Mammary epithelial cell (primary cell): ENCODE measurements at regions of chr7 and their contacts with region 1.

Region 1: GRCh38 chr7:24812310-24812945 is 55.2 kb upstream of the GSDME start:
- DNase-seq: peak; percentile 39
- H3K4me3 ChIP-seq: no peak overlapping the region
- H3K27ac ChIP-seq: no peak overlapping the region
- H3K4me1 ChIP-seq: no peaks in the 10 kb centered on the region
- H3K27me3 ChIP-seq: no peaks in the 10 kb centered on the region
- CTCF ChIP-seq: peak; percentile 83 to 92

Region 2: DNA sequence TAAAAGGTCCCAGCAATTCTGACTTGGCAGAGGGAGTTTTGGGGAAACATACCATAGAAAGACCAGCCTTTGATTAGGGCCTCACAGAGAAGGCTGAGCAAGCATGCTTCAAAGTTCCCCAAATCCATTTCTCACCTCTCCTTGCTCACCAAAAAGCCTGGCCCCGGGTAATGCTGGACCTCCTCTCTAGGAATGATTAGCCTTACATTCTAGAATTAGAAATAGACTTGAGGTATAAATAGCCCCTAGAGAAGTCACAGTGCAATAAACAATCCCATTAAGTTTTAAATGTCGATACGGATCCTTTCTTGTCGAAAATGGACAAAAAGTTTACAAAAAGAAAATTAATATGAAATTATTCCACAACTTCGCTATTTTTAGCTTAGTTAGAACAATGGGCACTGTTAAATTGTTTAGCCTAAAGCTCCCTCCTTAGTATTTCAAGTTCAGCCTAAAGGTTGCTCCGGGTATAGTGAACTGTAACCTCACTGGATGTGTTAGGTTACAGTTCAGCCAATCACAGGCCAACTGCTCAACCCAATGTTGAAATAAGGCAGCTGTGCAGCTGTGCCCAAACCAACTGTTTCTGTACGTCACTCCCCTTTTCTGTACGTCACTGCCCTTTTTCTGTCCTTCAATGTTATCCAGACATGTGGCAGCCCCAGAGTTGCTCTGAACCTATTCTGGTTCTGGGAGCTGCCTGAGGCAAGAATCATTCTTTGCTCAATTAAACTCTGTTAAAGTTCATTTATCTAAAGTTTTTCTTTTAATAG is 47.3 kb before region 1 on chr7:
- CTCF ChIA-PET with region 1: no interaction called
- dilution Hi-C with region 1: loop called (anchors 5 kb)
- in situ Hi-C with region 1: no loop called
- intact Hi-C with region 1: no loop called
- DNase-seq: no peak
- H3K4me3 ChIP-seq: no peak overlapping the region
- H3K27ac ChIP-seq: no peak overlapping the region
- H3K4me1 ChIP-seq: no peaks in the 10 kb centered on the region
- H3K27me3 ChIP-seq: no peaks in the 10 kb centered on the region
- CTCF ChIP-seq: no peak

Region 3: DNA sequence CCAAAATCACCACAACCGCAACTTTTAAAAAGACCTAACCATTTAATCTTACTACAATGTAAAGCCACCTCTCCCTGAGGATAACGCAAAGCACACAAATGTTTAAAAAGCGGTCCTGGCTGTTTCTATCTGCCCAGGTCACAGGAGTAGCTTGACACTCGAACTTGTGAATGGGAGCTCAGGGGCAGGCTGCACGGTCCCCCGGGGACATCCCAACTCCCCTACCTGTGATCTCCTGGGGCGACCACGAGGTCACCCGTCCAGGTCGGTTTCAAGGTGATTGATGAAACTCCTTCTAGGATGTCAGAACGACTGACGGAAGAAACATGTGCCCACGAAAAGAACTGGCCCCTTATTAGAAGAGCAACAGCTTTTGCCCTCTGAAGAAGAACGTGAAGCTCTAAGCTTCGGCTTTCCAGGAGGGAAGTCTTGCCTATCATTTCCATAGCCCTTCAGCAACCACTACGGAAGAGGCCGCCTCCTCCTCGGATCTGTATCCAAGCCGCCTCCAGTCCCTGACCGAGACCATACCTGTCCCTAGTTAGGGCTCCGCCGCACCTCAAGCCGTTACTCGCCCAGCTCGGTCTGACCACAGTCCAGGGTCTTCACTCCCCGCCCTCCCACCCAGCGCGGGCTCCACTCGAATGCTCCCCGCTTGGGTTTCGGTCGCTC is 312.2 kb after region 1 on chr7:
- CTCF ChIA-PET with region 1: interaction called, 10 read pairs
- dilution Hi-C with region 1: no loop called
- in situ Hi-C with region 1: no loop called
- intact Hi-C with region 1: no loop called
- DNase-seq: peak; percentile 16
- H3K4me3 ChIP-seq: peak overlapping the region; percentile 62 to 76 (median 62)
- H3K27ac ChIP-seq: peak overlapping the region; percentile 93
- H3K4me1 ChIP-seq: peaks cover 11% of the 10 kb centered on the region
- H3K27me3 ChIP-seq: no peaks in the 10 kb centered on the region
- CTCF ChIP-seq: no peak